Activated B cell treated with CpG ODN at 0.5 μM for 24 hours (primary cell): ENCODE measurements at regions of chr14 and their contacts with region 1.

Region 1: DNA sequence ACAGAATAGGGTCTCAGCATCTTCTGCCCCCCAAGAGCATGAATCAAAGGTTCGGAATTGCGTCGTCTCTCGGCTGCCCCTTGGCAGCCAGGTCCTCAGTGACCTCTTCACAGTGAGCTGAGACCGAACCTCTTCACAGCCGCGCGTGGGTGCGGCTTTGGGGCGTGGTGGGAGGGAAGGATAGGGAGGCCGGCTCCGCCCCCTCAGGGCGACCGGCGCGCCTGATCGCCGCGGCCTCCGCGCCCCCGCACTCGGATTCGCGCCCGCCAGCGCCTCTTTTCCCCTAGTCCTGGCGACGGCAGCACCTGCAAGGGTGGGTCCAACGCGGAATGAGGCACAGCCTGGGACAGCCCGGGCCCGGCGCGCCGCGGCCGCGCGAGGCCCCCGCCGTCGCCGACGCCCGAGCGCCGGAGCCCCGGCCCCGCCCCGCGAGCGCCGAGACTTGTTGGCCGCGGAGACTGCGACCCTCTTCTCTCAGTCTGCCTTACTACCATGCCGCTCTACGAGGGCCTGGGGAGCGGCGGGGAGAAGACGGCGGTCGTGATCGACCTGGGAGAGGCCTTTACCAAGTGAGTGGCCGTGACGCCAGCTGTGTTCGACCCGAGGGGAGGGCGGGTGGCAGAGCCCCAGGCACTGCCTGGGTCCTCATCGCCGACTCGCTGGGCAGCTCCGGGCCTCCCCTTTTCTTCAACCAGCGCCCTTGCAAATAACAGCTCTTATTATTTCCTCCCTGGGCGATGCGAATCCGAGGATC is at the start of gene ACTR10:
- DNase-seq: peak; percentile 93
- ATAC-seq: peak; percentile 88
- H3K4me3 Mint-ChIP-seq: peak within 1 kb of the TSS; percentile 94
- H3K27ac Mint-ChIP-seq: peak within 1 kb of the TSS; percentile 93
- H3K4me1 Mint-ChIP-seq: peaks cover 28% of the 10 kb centered on the region
- H3K27me3 Mint-ChIP-seq: no peaks in the 10 kb centered on the region
- CTCF ChIP-seq: no peak
- total RNA-seq, gene ACTR10: 36.5 and 40.5 TPM in 2 replicates

Region 2: DNA sequence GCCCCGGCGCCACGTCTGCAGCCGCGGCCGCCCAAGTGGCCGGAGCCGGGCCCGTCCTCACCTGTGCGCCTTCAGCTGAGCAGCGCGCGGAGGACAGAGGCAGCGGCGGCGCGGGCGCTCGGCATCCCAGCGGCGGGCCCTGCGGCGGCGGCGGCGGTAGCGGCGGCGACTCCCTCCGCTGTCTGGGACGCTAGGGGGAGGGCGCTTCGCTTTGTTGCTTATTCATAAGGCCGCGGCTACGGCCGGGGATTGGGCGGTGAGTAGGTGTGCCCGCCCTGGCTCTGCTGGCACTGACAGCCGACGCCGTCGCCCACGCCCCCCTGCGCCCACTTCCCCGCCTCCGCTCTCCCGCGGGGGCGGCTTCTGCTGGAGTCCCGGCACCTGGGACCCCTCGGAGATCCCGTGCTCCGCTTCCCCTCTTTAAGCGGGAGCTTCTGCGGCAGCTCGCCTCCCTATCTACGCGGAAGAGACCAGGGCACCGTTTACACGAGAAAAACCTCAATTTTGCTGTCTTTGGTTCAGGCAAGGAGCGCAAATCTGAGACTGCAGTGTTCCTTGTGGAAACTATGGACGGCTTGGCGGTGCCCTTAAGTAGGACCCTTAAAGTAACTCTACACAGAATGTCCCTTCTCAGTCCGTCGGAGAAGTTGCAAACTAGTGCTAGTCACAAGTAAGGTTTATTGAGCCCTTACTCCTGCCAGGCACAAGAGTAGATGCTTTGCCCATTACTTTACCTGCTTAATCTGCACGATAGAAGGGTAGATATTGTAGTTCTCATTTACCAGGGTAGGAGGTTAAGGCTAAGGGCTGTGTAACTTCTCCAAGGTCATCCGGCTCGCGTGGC is 47.7 kb before region 1 on chr14 and contains the start of gene ARMH4:
- CTCF ChIA-PET with region 1: no interaction called
- POLR2A ChIA-PET with region 1: no interaction called
- intact Hi-C with region 1: loop called (anchors 1 kb)
- DNase-seq: peak; percentile 60
- ATAC-seq: peak; percentile 99
- H3K4me3 Mint-ChIP-seq: peak within 1 kb of the TSS; percentile 79
- H3K27ac Mint-ChIP-seq: no peak within 1 kb of the TSS
- H3K4me1 Mint-ChIP-seq: peaks cover 14% of the 10 kb centered on the region
- H3K27me3 Mint-ChIP-seq: peaks cover 40% of the 10 kb centered on the region
- CTCF ChIP-seq: no peak
- total RNA-seq, gene ARMH4: not detected in 2 replicates

Region 3: DNA sequence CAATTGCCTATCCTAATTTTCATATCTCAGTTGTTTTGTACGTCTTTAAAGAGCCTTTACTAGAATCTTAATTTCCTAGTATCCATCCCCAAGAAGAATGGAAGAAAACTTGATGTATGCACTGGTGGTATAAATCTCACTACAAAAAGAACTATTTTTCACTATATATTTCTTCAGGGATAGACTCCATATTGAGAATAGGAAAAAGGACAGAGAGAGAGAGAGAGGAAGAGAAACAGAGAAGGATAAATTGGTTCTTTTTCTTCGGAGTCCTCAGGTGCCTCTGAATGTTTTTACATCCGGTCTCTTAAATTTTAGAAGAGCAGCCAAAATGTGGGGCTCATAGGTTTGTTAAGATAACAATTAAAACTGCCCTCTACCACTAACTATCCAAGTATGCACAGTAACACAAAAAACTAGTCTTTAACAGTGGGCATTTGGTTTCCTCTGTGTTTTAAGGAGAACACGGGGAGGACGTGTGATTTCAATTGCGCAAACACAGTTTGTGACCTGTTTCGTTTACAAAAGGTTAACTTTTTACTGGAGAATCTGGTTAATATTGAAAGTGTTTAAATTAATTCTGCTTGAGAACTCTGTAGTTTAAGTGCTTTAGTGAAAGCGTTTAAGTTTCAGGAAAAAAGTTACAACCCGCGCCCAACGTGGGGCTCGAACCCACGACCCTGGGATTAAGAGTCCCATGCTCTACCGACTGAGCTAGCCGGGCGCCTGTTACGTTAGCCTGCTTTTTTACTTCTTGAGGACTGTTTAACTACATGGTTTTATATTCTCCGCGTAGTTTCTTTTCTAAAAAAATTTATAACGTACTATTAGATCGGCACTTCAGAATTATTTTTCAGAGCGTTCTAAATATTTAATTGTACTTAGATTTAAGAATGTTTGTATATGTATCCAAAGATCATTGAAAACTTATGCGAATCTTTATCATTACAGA is 39.6 kb after region 1 on chr14:
- CTCF ChIA-PET with region 1: no interaction called
- POLR2A ChIA-PET with region 1: interaction called, 25 read pairs
- intact Hi-C with region 1: loop called (anchors 1 kb)
- DNase-seq: peak; percentile 63
- ATAC-seq: peak; percentile 10
- H3K4me3 Mint-ChIP-seq: no peak overlapping the region
- H3K27ac Mint-ChIP-seq: no peak overlapping the region
- H3K4me1 Mint-ChIP-seq: peaks cover 25% of the 10 kb centered on the region
- H3K27me3 Mint-ChIP-seq: peaks cover 2% of the 10 kb centered on the region
- CTCF ChIP-seq: no peak

Region 4: DNA sequence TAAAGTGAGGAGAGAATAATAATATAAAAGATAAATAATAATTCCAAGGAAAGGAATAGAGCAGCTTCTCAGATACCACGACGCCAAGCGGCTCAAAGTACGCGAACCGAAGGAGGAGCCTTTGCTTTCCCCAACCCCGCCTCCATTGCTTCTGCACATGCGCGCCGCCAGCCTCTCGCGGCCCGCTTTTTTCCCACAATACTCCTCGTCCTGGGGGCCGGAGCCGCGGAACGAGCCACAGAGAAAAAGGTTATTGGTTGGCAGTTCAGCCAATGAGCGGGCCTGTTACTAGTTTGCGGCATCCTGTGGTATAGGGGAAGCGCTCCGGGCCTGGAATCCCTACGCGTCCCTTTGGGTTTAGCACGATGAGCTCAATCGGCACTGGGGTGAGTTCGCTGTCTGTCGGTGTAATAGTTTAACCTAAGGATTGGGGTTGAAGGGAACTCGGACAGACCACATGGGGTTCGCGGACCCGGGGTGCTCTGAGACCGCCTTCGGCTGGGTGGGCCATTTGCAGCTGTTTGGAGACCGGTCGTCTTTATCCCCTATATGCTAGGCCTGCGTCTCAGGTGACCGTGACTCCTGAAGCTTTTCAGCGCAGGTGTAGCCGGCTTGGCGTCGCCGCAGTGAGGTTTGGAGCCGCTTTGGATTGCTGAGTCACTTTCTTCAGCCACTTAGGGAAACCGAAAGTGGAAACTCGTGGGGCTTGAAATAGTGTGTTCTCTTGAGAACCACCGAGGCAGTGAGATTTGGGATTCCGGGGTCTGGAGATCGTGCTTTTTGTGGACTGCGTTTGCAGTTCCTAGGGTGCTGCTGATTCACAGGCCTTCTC is 44.9 kb after region 1 on chr14 and contains the start of gene PSMA3:
- CTCF ChIA-PET with region 1: no interaction called
- POLR2A ChIA-PET with region 1: interaction called, 25 read pairs
- intact Hi-C with region 1: loop called (anchors 1 kb)
- DNase-seq: peak; percentile 94
- ATAC-seq: peak; percentile 91
- H3K4me3 Mint-ChIP-seq: peak within 1 kb of the TSS; percentile 98
- H3K27ac Mint-ChIP-seq: peak within 1 kb of the TSS; percentile 98
- H3K4me1 Mint-ChIP-seq: peaks cover 51% of the 10 kb centered on the region
- H3K27me3 Mint-ChIP-seq: peaks cover 1% of the 10 kb centered on the region
- CTCF ChIP-seq: no peak
- total RNA-seq, gene PSMA3: 204 and 208 TPM in 2 replicates

Region 5: GRCh38 chr14:58637391-58638230 is 437.7 kb after region 1 on chr14 and contains the start of gene DACT1:
- CTCF ChIA-PET with region 1: no interaction called
- POLR2A ChIA-PET with region 1: no interaction called
- intact Hi-C with region 1: loop called (anchors 5 kb)
- DNase-seq: peak; percentile 52
- ATAC-seq: peak; percentile 80
- H3K4me3 Mint-ChIP-seq: peak within 1 kb of the TSS; percentile 94
- H3K27ac Mint-ChIP-seq: peak within 1 kb of the TSS; percentile 90
- H3K4me1 Mint-ChIP-seq: peaks cover 46% of the 10 kb centered on the region
- H3K27me3 Mint-ChIP-seq: peaks cover 17% of the 10 kb centered on the region
- CTCF ChIP-seq: no peak
- total RNA-seq, gene DACT1: 3.0 and 3.5 TPM in 2 replicates